AG04449 (cell line): ENCODE measurements at regions of chr1 and their contacts with region 1.

Region 1: DNA sequence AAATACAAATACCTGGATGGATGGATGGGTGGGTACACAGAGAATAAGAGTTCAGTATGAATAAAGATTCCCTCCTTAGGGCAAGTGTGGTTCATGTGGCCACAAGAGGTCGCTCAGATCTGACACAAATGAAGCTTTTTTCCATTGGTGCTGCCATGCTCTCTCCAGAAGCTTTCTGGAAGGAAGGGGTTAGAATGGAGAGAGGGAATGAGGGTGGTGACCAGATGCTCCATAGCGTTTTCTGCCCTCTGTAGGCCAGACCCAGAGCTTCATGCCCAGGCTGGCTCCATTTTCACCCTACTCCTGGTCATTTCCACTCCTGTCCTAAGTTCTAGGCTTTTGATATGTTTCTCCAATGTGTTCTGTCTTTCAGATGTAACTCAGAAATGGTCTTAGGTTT is 3.3 kb upstream of the FCRL6 start:
- DNase-seq: no peak
- H3K4me3 ChIP-seq: no peak overlapping the region
- CTCF ChIP-seq: peak; percentile 55

Region 2: DNA sequence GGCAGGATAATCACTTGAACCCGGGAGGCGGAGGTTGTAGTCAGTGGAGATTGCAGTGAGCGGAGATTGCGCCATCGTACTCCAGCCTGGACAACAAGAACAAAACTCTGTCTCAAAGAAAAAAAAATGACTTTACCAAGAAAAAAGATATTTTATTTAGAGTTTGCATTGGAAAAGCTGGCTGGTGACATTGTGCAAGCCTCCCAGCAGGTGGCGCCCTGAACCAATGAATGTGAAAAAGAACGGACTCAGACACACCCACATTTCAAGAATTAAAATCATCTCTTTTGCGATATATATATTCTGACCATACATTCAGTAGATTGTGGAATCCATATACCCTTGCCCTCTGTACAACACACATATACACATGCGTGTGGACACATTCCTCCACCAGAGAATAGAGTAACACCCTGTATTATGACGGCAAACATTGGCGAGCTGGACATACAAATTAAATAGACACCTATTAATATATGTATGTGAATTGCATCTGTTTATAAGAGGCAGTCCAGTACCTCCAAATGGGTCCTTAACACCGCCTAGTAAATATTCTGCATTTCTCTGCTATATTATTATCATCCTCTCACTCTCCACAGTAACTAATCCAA is 666.5 kb before region 1 on chr1:
- CTCF ChIA-PET with region 1: interaction called, 18 read pairs
- POLR2A ChIA-PET with region 1: no interaction called
- DNase-seq: no peak
- H3K4me3 ChIP-seq: no peak overlapping the region
- CTCF ChIP-seq: peak; percentile 77

Region 3: GRCh38 chr1:159705251-159705903 is 93.5 kb before region 1 on chr1:
- CTCF ChIA-PET with region 1: no interaction called
- POLR2A ChIA-PET with region 1: no interaction called
- DNase-seq: no peak
- H3K4me3 ChIP-seq: no peak overlapping the region
- CTCF ChIP-seq: no peak

Region 4: DNA sequence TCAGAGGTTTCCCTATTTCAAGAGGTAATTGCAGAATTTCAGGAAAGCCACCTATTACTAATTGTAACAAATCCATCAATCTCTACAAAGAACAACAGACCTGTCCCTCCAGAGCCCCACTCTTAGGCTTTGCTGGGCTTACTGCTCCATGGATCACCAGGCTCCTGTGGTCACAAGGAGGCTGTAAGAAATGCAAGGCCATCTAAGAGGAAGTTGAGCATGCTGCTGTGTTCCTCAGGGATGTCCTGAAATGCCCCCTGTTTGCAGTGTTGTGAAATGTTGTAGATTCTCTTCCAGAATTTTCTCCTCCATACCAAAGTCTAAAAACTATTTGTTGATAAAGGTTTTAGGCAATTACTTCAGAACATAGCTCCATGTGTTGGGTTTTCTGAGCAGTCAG is 42.5 kb before region 1 on chr1:
- CTCF ChIA-PET with region 1: no interaction called
- POLR2A ChIA-PET with region 1: no interaction called
- DNase-seq: no peak
- H3K4me3 ChIP-seq: no peak overlapping the region
- CTCF ChIP-seq: no peak

Region 5: GRCh38 chr1:159821171-159821867 is 22.4 kb after region 1 on chr1:
- CTCF ChIA-PET with region 1: interaction called, 242 read pairs
- POLR2A ChIA-PET with region 1: no interaction called
- DNase-seq: no peak
- H3K4me3 ChIP-seq: no peak overlapping the region
- CTCF ChIP-seq: peak; percentile 73

Region 6: GRCh38 chr1:159854693-159855192 is 55.9 kb after region 1 on chr1:
- CTCF ChIA-PET with region 1: interaction called, 28 read pairs
- POLR2A ChIA-PET with region 1: no interaction called
- DNase-seq: no peak
- H3K4me3 ChIP-seq: peak overlapping the region; percentile 63
- CTCF ChIP-seq: no peak

Region 7: GRCh38 chr1:159891275-159892157 is 92.6 kb after region 1 on chr1:
- CTCF ChIA-PET with region 1: interaction called, 1,007 read pairs
- POLR2A ChIA-PET with region 1: interaction called, 3 read pairs
- DNase-seq: peak; percentile 58
- H3K4me3 ChIP-seq: no peak overlapping the region
- CTCF ChIP-seq: peak; percentile 99

Region 8: GRCh38 chr1:159916184-159917051 is 117.5 kb after region 1 on chr1:
- CTCF ChIA-PET with region 1: interaction called, 17 read pairs
- POLR2A ChIA-PET with region 1: no interaction called
- DNase-seq: peak; percentile 92
- H3K4me3 ChIP-seq: no peak overlapping the region
- CTCF ChIP-seq: no peak

Region 9: GRCh38 chr1:159979257-159979656 is 180.4 kb after region 1 on chr1:
- CTCF ChIA-PET with region 1: no interaction called
- POLR2A ChIA-PET with region 1: no interaction called
- DNase-seq: no peak
- H3K4me3 ChIP-seq: no peak overlapping the region
- CTCF ChIP-seq: no peak

Region 10: DNA sequence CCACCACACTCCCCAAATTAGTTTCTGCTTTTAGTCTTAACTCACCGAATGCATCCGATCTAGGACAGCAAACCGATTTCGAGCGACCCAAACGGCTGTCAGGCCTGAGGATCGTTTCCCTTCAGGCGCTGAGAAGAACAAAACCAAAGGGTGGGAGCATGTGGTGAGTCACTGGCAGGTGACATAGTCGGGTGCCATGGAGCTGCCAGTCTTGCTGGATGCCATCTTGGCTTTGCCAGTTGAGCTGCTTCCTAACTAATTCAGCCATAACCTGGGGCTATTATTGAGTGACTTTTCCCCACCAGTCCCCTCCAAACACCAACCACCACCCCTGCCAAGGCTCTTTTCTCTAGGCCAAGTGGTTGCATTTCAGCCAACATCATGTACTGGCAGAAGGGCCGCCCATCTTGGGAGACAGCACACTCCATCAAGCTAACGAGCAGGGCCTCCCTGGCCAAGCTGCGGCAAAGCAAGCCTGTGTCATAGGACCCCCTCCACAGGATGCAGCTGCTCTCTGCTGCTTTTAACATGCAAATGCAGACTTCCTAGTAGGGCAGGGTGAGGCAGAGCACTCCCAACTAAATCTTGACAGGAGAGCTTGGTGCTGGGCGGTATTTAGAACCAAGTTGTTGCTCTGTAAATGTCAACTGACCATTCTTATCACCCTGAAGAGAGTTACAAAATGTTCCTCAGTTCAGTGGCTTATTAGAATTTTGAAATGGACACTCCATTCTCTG is 508.4 kb after region 1 on chr1:
- CTCF ChIA-PET with region 1: no interaction called
- POLR2A ChIA-PET with region 1: no interaction called
- DNase-seq: no peak
- H3K4me3 ChIP-seq: no peak overlapping the region
- CTCF ChIP-seq: no peak